HCT116 (cell line): ENCODE measurements at regions of chr3 and their contacts with region 1.

Region 1: GRCh38 chr3:154668187-154668586 is 238.2 kb upstream of the GPR149 start:
- DNase-seq: no peak
- ATAC-seq: no peak
- H3K4me3 ChIP-seq: no peak overlapping the region
- H3K27ac ChIP-seq: no peak overlapping the region
- H3K4me1 ChIP-seq: no peaks in the 10 kb centered on the region
- H3K27me3 ChIP-seq: no peaks in the 10 kb centered on the region
- CTCF ChIP-seq: no peak
- POLR2A ChIP-seq: no peak
- RAD21 ChIP-seq: no peak

Region 2: DNA sequence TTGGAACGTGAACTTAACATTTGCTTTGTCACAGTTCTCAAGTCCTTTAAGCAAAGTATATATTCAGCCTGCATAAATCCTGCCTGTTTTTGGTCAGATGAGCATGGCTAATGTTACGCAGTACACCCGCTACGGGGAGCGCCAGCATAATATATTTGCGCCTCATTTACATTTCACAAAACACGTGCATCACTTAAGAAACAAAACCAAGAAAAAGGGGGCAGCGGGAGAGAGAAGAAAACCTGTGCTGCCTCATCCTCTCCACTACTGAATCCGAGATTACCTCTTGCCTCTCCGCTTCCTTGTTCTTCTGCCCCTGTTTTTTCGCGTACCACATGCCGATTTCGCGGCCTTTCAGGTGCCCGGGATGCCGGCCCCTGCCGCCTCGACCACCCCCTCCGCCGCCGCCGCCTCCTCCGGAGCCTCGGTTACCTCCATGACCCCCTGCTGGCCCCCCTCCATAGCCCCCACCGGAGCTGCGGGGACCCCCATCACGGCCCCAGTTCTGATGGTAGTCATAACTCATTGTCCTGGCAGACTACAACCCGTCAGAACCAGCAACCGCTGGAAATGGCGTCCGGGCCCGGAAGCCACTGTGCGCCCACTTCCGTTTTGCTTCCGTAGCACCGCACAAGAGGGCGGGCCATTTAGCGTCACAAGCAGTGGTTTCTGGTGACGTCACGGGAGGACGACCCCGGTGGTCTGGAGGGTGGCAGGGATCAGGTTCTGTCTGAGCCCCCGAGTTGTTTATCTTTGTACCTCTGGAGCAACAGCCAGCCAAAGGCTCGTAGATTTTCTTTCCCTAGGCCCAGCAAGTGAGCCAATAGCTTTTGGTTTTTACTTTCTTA is 344.1 kb before region 1 on chr3 and contains the start of gene DHX36:
- CTCF ChIA-PET with region 1: no interaction called
- POLR2A ChIA-PET with region 1: no interaction called
- RAD21 ChIA-PET with region 1: no interaction called
- intact Hi-C with region 1: no loop called
- DNase-seq: peak; percentile 73
- ATAC-seq: peak; percentile 94
- H3K4me3 ChIP-seq: peak within 1 kb of the TSS; percentile 90 to 93
- H3K27ac ChIP-seq: peak within 1 kb of the TSS; percentile 53
- H3K4me1 ChIP-seq: peaks cover 3 to 15% of the 10 kb centered on the region in 2 experiments; a peak in 3 of 4 replicates
- H3K27me3 ChIP-seq: no peaks in the 10 kb centered on the region
- CTCF ChIP-seq: no peak
- POLR2A ChIP-seq: peak; percentile 86
- RAD21 ChIP-seq: no peak
- total RNA-seq, gene DHX36: 49.9 TPM

Region 3: GRCh38 chr3:154708554-154708953 is 40.4 kb after region 1 on chr3:
- CTCF ChIA-PET with region 1: no interaction called
- POLR2A ChIA-PET with region 1: no interaction called
- RAD21 ChIA-PET with region 1: no interaction called
- intact Hi-C with region 1: loop called (anchors 1 kb)
- DNase-seq: no peak
- ATAC-seq: no peak
- H3K4me3 ChIP-seq: no peak overlapping the region
- H3K27ac ChIP-seq: no peak overlapping the region
- H3K4me1 ChIP-seq: no peaks in the 10 kb centered on the region
- H3K27me3 ChIP-seq: no peaks in the 10 kb centered on the region
- CTCF ChIP-seq: no peak
- POLR2A ChIP-seq: no peak
- RAD21 ChIP-seq: no peak

Region 4: DNA sequence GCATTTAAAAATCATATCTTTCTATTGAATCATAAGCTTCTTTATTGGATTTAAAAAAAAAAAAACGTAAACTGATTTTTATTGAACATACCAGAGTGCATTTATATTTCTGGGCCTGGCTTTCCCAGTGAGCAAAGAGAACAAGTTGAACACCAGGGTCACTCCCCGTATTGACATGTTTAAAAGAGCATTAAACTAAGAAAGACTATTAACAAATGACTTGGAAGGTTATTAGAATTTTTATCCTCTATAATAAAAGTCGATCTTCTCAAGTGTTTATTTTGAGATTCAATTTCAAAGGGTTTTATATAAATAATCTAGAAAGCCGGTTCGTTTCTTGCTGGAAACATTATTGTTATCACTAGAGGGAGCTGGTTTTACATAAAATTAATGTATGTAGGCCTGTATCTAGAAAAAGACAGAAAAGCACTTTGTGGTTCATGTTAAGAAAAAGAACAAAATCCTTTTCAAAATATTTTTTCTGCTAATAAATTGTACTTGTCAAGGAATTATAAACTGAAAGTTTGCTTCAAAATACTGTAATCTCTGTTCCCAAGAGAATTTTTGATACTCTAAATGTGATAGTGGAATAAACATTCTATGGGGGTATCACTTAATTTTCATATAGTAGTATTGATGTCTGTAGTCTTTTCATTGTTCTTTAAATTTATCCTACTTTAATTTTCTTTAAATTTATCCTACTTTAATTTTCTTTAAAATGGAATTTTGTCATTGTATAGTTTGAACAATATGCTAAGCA is 90.1 kb after region 1 on chr3:
- CTCF ChIA-PET with region 1: no interaction called
- POLR2A ChIA-PET with region 1: no interaction called
- RAD21 ChIA-PET with region 1: no interaction called
- intact Hi-C with region 1: no loop called
- DNase-seq: no peak
- ATAC-seq: peak; percentile 53; the same call in 1 of the 2 replicates
- H3K4me3 ChIP-seq: no peak overlapping the region
- H3K27ac ChIP-seq: no peak overlapping the region
- H3K4me1 ChIP-seq: no peaks in the 10 kb centered on the region
- H3K27me3 ChIP-seq: no peaks in the 10 kb centered on the region
- CTCF ChIP-seq: peak; percentile 35 to 54 (median 48)
- POLR2A ChIP-seq: no peak
- RAD21 ChIP-seq: peak; percentile 62